ENCODE measurements at regions of chr4 and their contacts with region 1.

Region 1: DNA sequence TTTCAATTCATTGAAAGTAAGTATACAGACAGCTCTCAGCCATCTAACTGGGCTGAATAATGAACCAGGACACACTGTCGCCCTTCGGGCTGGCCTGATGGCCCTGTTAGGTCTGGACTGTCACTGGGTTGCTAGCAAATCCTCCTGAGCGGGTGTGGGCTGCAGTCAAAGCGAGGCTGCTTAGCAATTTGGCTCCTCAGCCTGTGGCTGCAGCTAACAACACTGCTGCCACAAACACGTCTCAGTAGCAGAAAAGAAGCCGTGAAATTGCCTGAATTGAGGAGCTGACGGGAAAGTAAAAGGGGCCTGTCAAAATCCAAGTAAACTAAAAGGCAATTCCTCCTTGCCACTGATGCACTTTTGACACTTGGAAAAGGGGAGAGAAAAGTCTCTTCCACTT is 72.8 kb downstream of the SMIM20 start:
- DNase-seq: no peak
- H3K4me3 Mint-ChIP-seq: no peak overlapping the region
- H3K27ac Mint-ChIP-seq: no peak overlapping the region
- H3K4me1 Mint-ChIP-seq: peaks cover 5% of the 10 kb centered on the region
- H3K27me3 Mint-ChIP-seq: no peaks in the 10 kb centered on the region

Region 2: GRCh38 chr4:25925486-25926201 is 61.2 kb before region 1 on chr4:
- CTCF ChIA-PET with region 1: interaction called, 11 read pairs
- POLR2A ChIA-PET with region 1: no interaction called
- intact Hi-C with region 1: no loop called
- DNase-seq: peak; percentile 56
- H3K4me3 Mint-ChIP-seq: no peak overlapping the region
- H3K27ac Mint-ChIP-seq: no peak overlapping the region
- H3K4me1 Mint-ChIP-seq: peaks cover 9% of the 10 kb centered on the region
- H3K27me3 Mint-ChIP-seq: no peaks in the 10 kb centered on the region

Region 3: GRCh38 chr4:26281881-26282280 is 295.1 kb after region 1 on chr4:
- CTCF ChIA-PET with region 1: no interaction called
- POLR2A ChIA-PET with region 1: no interaction called
- intact Hi-C with region 1: no loop called
- DNase-seq: no peak
- H3K4me3 Mint-ChIP-seq: no peak overlapping the region
- H3K27ac Mint-ChIP-seq: no peak overlapping the region
- H3K4me1 Mint-ChIP-seq: peaks cover 11% of the 10 kb centered on the region
- H3K27me3 Mint-ChIP-seq: no peaks in the 10 kb centered on the region

Measured in activated CD4-positive, alpha-beta memory T cell treated with anti-CD3 and anti-CD28 coated beads for 36 hours (primary cell).